PC-9 (cell line): ENCODE measurements at regions of chrX and their contacts with region 1.

Region 1: GRCh38 chrX:119887721-119888425 is 7.8 kb upstream of the AKAP14 start:
- DNase-seq: peak; percentile 65 to 77
- H3K4me3 ChIP-seq: peak overlapping the region; percentile 66
- H3K27ac ChIP-seq: no peak overlapping the region
- H3K4me1 ChIP-seq: no peaks in the 10 kb centered on the region
- H3K27me3 ChIP-seq: no peaks in the 10 kb centered on the region
- CTCF ChIP-seq: peak; percentile 83

Region 2: GRCh38 chrX:119943185-119943988 is 55.5 kb after region 1 on chrX and contains the start of gene NKAP:
- CTCF ChIA-PET with region 1: interaction called, 6 read pairs
- POLR2A ChIA-PET with region 1: no interaction called
- intact Hi-C with region 1: loop called (anchors 5 kb)
- DNase-seq: peak; percentile 88 to 89
- H3K4me3 ChIP-seq: peak within 1 kb of the TSS; percentile 79
- H3K27ac ChIP-seq: peak within 1 kb of the TSS; percentile 81
- H3K4me1 ChIP-seq: peaks cover 17% of the 10 kb centered on the region
- H3K27me3 ChIP-seq: no peaks in the 10 kb centered on the region
- CTCF ChIP-seq: no peak; the same call in 1 of the 2 replicates
- total RNA-seq, gene NKAP: 15.7 and 18.6 TPM in 2 replicates